CD8-positive, alpha-beta T cell (primary cell): ENCODE measurements at regions of chr10 and their contacts with region 1.

Region 1: DNA sequence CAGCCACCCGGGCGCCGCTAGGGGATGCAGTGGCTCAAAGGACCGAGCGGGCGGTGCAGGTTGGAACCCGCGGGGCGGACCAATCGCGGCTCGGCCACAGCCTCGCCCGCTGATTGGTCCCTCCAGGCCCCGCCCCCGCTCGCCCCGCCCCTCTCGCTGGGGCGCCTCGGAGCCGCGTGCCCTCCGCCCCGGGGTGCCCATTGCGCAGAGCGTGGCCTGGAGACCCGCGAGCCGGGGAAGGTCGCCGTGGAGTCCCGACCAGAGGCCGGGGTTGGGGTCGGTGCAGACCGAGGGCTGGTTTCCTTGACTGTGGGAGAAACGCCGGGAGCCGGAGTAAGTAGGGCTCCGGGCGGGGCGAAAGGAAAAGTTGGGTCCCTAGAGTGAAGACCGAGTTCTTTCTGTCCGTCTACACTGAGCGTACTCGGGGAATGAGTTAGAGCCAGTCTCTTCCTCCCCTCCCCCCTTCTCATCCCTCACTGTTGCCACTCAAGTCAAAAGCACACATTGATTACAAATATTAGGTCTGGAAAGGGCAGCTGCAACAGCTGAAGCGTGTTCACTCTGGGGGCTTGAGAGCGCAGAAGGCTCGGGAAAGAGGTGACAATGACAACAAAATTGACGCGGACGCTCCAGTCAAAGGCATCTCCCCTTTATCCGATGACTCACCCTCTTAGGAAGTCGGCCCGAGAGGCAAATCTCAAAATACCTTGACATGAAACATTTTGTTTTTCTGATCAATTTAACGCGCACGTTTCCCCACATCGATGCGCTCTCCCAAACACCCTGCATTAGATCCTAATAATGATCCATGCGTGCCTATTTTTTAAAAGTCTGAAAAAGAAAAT is 820 bp upstream of the GATA3 start:
- DNase-seq: peak; percentile 85 to 97 (median 95)
- ATAC-seq: peak; percentile 60
- H3K4me3 ChIP-seq: peak overlapping the region; percentile 87 to 90
- H3K4me3 Mint-ChIP-seq: peak overlapping the region; percentile 83
- H3K27ac ChIP-seq: peak overlapping the region; percentile 56 to 65
- H3K27ac Mint-ChIP-seq: peak overlapping the region; percentile 92
- H3K4me1 ChIP-seq: peaks cover 65% of the 10 kb centered on the region
- H3K4me1 Mint-ChIP-seq: peaks cover 49% of the 10 kb centered on the region
- H3K27me3 ChIP-seq: peaks cover 35 to 39% of the 10 kb centered on the region in 2 experiments
- H3K27me3 Mint-ChIP-seq: peaks cover 23% of the 10 kb centered on the region
- CTCF ChIP-seq: no peak

Region 2: DNA sequence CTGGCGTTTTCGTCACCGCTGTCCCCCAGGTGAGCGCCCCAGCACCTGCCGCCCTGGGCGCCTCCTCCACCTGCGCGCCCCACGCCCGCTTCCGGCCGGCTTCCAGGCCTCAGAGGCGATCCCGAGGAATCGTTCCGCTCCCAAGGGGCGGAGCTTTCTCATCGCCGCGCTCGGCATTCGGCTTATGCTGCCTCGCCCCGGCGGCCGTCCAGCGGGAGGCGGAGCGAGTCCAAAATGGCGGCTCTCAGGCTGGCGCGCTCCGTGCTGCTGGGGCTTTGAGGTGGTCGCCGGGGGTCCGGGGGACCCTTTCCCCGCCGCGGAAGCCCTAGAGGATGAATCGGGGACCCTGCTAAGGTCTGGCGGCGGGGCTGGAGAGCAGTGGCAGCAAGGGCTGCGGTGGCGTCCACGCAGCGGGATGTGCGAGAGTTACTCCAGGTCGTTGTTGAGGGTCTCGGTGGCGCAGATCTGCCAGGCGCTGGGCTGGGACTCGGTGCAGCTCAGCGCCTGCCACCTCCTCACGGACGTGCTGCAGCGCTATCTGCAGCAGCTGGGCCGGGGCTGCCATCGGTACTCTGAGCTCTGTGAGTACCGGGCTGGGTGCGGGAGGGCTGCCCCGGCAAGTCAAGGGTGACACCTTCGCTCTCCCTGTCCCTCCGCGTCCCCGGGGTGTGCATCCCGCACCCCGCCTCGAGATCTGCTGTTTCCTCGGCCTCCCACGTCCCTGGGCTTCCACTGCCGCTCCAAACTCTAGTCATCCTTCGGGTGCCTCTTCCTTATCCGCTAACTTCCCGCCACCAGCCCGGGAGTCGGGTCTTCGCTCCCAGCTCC is 235.2 kb before region 1 on chr10 and contains the start of gene TAF3:
- CTCF ChIA-PET with region 1: no interaction called
- POLR2A ChIA-PET with region 1: no interaction called
- intact Hi-C with region 1: loop called in 1 of 2 experiments (anchors 5 kb)
- DNase-seq: peak; percentile 88 to 95 (median 92)
- ATAC-seq: peak; percentile 92
- H3K4me3 ChIP-seq: peak within 1 kb of the TSS; percentile 93 to 99
- H3K4me3 Mint-ChIP-seq: peak within 1 kb of the TSS; percentile 98
- H3K27ac ChIP-seq: peak within 1 kb of the TSS; percentile 64 to 70
- H3K27ac Mint-ChIP-seq: peak within 1 kb of the TSS; percentile 91
- H3K4me1 ChIP-seq: peaks cover 25% of the 10 kb centered on the region
- H3K4me1 Mint-ChIP-seq: peaks cover 44% of the 10 kb centered on the region
- H3K27me3 ChIP-seq: no peaks in the 10 kb centered on the region
- H3K27me3 Mint-ChIP-seq: no peaks in the 10 kb centered on the region
- CTCF ChIP-seq: no peak
- total RNA-seq, gene TAF3: 12.1 to 12.4 TPM

Region 3: DNA sequence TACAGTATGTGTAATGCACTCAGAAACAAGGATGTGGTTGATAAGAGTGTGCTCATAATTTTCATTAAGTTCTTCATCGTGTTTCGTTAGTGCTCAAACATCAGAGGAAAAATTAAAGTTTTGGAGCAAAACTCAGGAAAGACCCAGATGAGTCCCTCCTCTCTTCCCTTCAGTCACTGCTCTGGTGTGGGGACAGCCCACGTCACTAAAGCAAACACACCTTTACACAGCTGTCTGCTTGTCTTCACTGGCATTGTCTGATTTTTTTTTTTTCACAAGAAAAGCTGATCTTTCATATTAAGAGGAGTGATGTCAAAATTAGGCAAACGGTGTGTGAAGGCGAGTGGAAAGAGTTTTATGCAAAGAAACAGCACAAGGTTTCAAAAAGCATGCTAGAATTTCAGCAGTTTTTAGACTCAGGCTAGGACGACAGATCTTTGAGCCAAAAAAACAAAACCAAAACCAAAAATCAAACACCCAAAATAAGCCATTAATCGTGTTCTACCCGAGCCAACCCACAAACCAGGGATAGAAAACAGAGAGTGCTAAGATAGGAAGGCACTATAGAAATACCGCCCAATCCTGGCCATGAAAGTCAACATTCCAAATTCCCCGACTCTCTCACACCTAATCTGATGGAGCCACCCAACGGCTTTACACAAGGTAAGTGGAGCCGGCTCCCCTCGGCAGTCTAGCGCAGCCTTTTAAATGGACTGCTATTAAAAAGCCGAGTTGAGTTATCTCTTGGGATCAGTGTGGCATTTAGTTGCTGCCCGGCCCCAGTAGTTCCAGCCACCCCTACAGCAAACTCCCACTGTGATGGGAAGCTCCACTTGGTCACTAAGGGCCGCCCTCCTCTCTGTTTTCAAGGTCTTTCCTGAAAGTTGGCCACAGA is 27.1 kb before region 1 on chr10:
- CTCF ChIA-PET with region 1: no interaction called
- POLR2A ChIA-PET with region 1: no interaction called
- intact Hi-C with region 1: no loop called
- DNase-seq: peak in 1 of 9 experiments; percentile 18
- ATAC-seq: peak; percentile 31
- H3K4me3 ChIP-seq: peak overlapping the region; percentile 2 to 29
- H3K4me3 Mint-ChIP-seq: peak overlapping the region; percentile 78
- H3K27ac ChIP-seq: no peak overlapping the region
- H3K27ac Mint-ChIP-seq: no peak overlapping the region
- H3K4me1 ChIP-seq: no peaks in the 10 kb centered on the region
- H3K4me1 Mint-ChIP-seq: peaks cover 6% of the 10 kb centered on the region
- H3K27me3 ChIP-seq: no peaks in the 10 kb centered on the region
- H3K27me3 Mint-ChIP-seq: peaks cover 36% of the 10 kb centered on the region
- CTCF ChIP-seq: no peak

Region 4: GRCh38 chr10:8404391-8405120 is 350.9 kb after region 1 on chr10:
- CTCF ChIA-PET with region 1: no interaction called
- POLR2A ChIA-PET with region 1: no interaction called
- intact Hi-C with region 1: loop called (anchors 2 to 5 kb)
- DNase-seq: peak in 6 of 9 experiments; percentile 31 to 93 (median 48)
- ATAC-seq: peak; percentile 71
- H3K4me3 ChIP-seq: peak overlapping the region; percentile 14 to 41
- H3K4me3 Mint-ChIP-seq: peak overlapping the region; percentile 74
- H3K27ac ChIP-seq: peak overlapping the region; percentile 66 to 83
- H3K27ac Mint-ChIP-seq: peak overlapping the region; percentile 90
- H3K4me1 ChIP-seq: peaks cover 43% of the 10 kb centered on the region
- H3K4me1 Mint-ChIP-seq: peaks cover 67% of the 10 kb centered on the region
- H3K27me3 ChIP-seq: no peaks in the 10 kb centered on the region
- H3K27me3 Mint-ChIP-seq: no peaks in the 10 kb centered on the region
- CTCF ChIP-seq: no peak

Region 5: GRCh38 chr10:8473205-8473604 is 419.5 kb after region 1 on chr10:
- CTCF ChIA-PET with region 1: no interaction called
- POLR2A ChIA-PET with region 1: no interaction called
- intact Hi-C with region 1: loop called in 1 of 2 experiments (anchors 1 kb)
- DNase-seq: peak in 3 of 9 experiments; percentile 15 to 69 (median 58)
- ATAC-seq: peak; percentile 34
- H3K4me3 ChIP-seq: no peak overlapping the region
- H3K4me3 Mint-ChIP-seq: no peak overlapping the region
- H3K27ac ChIP-seq: no peak overlapping the region
- H3K27ac Mint-ChIP-seq: no peak overlapping the region
- H3K4me1 ChIP-seq: no peaks in the 10 kb centered on the region
- H3K4me1 Mint-ChIP-seq: no peaks in the 10 kb centered on the region
- H3K27me3 ChIP-seq: no peaks in the 10 kb centered on the region
- H3K27me3 Mint-ChIP-seq: peaks cover 16% of the 10 kb centered on the region
- CTCF ChIP-seq: peak; percentile 16

Region 6: GRCh38 chr10:9097206-9097985 is 1043.7 kb after region 1 on chr10:
- CTCF ChIA-PET with region 1: interaction called, 3 read pairs
- POLR2A ChIA-PET with region 1: no interaction called
- intact Hi-C with region 1: loop called (anchors 1 to 10 kb)
- DNase-seq: peak in 2 of 9 experiments; percentile 32 to 68
- ATAC-seq: peak; percentile 69
- H3K4me3 ChIP-seq: no peak overlapping the region
- H3K4me3 Mint-ChIP-seq: no peak overlapping the region
- H3K27ac ChIP-seq: peak overlapping the region in 1 of 2 experiments; percentile 37
- H3K27ac Mint-ChIP-seq: peak overlapping the region; percentile 33
- H3K4me1 ChIP-seq: peaks cover 28% of the 10 kb centered on the region
- H3K4me1 Mint-ChIP-seq: peaks cover 33% of the 10 kb centered on the region
- H3K27me3 ChIP-seq: no peaks in the 10 kb centered on the region
- H3K27me3 Mint-ChIP-seq: no peaks in the 10 kb centered on the region
- CTCF ChIP-seq: no peak